Left cardiac atrium (tissue), 4 donors: ENCODE measurements at regions of chr6 and their contacts with region 1.

Region 1: GRCh38 chr6:75296811-75297779 is 12.5 kb upstream of the TMEM30A start:
- DNase-seq: no peak
- ATAC-seq: peak in 1 of 2 donors; percentile 33

Region 2: GRCh38 chr6:75504465-75505228 is 207.6 kb after region 1 on chr6:
- intact Hi-C with region 1: loop called in 1 of 2 experiments (anchors 5 kb)
- DNase-seq: no peak
- ATAC-seq: peak; percentile 81 to 96

Region 3: GRCh38 chr6:75516757-75517156 is 219.7 kb after region 1 on chr6:
- intact Hi-C with region 1: loop called in 1 of 2 experiments (anchors 10 kb)
- DNase-seq: no peak
- ATAC-seq: no peak

Region 4: DNA sequence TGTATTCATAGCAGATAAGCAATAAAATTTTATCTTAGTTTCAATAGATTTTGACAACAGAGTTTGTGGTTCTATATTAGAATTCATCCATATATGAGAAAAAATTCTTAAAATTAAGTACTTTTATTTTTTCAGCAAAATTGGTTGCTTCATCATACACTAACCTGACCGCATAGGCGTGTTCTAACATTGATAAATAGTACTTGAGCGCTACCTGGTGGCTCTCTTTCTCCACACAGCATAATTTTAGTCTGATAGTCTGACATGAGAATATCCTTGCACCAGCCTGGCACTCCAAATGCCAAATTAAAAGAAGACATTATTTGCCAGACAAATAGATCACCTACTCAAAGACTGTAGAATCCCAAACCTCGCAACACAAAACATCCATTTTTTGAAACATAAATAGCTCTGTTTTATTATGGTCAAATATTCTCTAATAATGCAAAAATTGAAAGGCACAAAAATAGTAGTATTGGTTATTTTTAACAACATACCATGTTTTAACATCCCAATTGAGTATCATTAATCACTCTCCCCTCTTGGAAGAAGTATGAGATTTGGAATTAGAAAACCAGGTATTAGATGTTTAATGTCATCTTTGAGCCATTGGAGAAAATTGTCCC is 229.5 kb after region 1 on chr6:
- intact Hi-C with region 1: loop called in 1 of 2 experiments (anchors 1 kb)
- DNase-seq: peak; percentile 52
- ATAC-seq: peak; percentile 85 to 89